ENCODE measurements at regions of chr2 and their contacts with region 1.

Region 1: DNA sequence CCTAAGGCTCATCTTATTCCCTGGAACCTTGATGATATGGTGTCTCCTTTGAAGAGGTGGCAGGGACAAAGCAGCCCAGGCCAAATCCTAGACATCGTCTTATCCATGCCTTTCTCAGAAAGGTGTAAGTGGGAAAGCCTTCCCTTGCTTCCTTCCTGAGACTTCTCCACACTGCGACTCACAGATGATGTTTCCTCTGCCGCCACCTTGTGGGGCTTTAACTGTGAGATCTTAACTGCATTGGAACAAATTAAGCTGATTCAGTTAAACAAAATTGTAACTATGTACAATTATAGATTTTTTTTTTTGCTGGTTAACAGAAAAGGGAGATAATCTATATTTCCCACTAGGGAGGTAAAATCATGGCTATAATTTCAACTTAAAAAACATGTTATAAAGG is 10.0 kb upstream of the GCA start:
- DNase-seq: no peak
- ATAC-seq: peak; percentile 91
- H3K4me3 ChIP-seq: no peak overlapping the region
- H3K27ac ChIP-seq: no peak overlapping the region
- H3K4me1 ChIP-seq: no peaks in the 10 kb centered on the region
- H3K27me3 ChIP-seq: no peaks in the 10 kb centered on the region
- CTCF ChIP-seq: peak; percentile 55 to 81 (median 62)
- EP300 ChIP-seq: no peak
- POLR2A ChIP-seq: no peak
- RAD21 ChIP-seq: peak; percentile 71

Region 2: DNA sequence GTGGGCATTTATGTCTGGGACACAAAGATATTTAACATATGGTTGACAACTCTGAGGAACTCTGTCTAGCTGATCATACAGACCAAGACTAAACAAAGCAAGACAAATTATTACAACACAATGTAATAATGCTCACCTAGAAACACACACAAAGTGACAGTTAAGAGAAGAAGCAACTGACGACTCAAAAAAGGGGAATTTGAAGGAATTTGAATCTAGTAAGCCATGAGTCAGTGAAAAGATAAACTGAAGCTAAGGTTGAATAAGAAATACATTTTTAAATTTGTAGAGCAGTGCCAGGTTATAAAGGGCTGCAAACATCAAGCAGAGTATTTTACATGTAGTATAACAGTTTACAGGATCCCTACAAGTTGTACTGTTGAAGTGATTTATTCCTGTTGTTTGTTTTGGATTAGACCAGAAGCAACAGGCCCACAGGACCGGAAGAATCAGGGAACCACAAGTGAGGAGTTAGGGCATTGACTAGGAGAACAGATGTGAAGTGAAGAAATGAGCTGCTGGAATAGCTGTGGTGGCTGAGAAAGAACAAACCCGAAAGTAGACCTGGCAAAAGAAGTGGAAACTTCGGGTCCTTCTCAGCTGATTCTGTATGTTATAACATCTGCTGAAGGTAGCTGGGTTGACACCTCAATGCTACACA is 51.1 kb before region 1 on chr2:
- CTCF ChIA-PET with region 1: interaction called, 24 read pairs
- POLR2A ChIA-PET with region 1: no interaction called
- RAD21 ChIA-PET with region 1: interaction called, 3 read pairs
- SMC1A ChIA-PET with region 1: interaction called, 5 read pairs
- in situ Hi-C with region 1: no loop called
- intact Hi-C with region 1: no loop called
- DNase-seq: no peak
- ATAC-seq: no peak
- H3K4me3 ChIP-seq: no peak overlapping the region
- H3K27ac ChIP-seq: no peak overlapping the region
- H3K4me1 ChIP-seq: no peaks in the 10 kb centered on the region
- H3K27me3 ChIP-seq: no peaks in the 10 kb centered on the region
- CTCF ChIP-seq: no peak
- EP300 ChIP-seq: no peak
- POLR2A ChIP-seq: no peak
- RAD21 ChIP-seq: no peak

Region 3: DNA sequence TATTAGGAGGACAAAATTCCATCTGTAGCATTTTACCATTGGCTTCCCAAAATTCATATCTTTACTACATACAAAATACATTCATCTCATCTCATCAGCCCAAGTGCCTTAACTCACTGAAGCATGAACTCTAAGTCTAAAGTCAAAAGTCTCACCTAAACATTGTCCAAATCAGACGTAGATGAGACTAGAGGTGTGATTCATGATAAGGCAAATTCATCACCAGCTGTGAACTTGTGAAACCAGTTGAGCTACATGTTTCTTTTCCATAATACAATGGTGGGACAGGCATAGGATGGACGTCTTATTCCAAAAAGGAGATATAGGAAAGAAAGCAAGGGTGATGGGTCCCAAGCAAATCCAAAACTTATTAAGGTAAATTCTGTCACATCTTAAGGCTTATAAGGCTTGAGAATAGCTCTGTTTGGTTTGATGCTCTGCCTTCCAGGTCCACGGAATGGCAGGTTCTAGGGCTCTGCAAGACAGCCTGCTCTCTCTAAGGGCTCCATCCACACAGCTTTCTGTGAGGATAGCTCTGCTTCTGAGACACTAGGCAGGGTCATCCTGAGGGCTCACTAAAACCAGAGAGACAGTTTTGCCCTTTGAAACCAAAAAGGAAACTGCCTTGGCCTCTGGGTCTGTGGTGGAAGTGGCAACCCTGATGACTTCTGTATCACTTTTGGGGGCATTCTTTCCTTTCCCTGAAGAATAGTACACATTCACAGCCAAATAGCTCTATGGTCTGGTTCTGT is 25.0 kb before region 1 on chr2:
- CTCF ChIA-PET with region 1: interaction called, 194 read pairs
- POLR2A ChIA-PET with region 1: interaction called, 4 read pairs
- RAD21 ChIA-PET with region 1: interaction called, 34 read pairs
- SMC1A ChIA-PET with region 1: interaction called, 15 read pairs
- in situ Hi-C with region 1: no loop called
- intact Hi-C with region 1: no loop called
- DNase-seq: no peak
- ATAC-seq: peak; percentile 51
- H3K4me3 ChIP-seq: no peak overlapping the region
- H3K27ac ChIP-seq: no peak overlapping the region
- H3K4me1 ChIP-seq: peaks cover 6% of the 10 kb centered on the region
- H3K27me3 ChIP-seq: no peaks in the 10 kb centered on the region
- CTCF ChIP-seq: no peak
- EP300 ChIP-seq: no peak
- POLR2A ChIP-seq: no peak
- RAD21 ChIP-seq: no peak

Region 4: GRCh38 chr2:162343824-162344616 is 10.1 kb after region 1 on chr2 and contains the start of gene GCA:
- CTCF ChIA-PET with region 1: interaction called, 46 read pairs
- POLR2A ChIA-PET with region 1: interaction called, 5 read pairs
- RAD21 ChIA-PET with region 1: interaction called, 7 read pairs
- SMC1A ChIA-PET with region 1: interaction called, 7 read pairs
- in situ Hi-C with region 1: no loop called
- intact Hi-C with region 1: no loop called
- DNase-seq: peak; percentile 93
- ATAC-seq: peak; percentile 99
- H3K4me3 ChIP-seq: peak within 1 kb of the TSS; percentile 98
- H3K27ac ChIP-seq: peak within 1 kb of the TSS; percentile 71
- H3K4me1 ChIP-seq: no peaks in the 10 kb centered on the region
- H3K27me3 ChIP-seq: no peaks in the 10 kb centered on the region
- CTCF ChIP-seq: no peak
- EP300 ChIP-seq: no peak
- POLR2A ChIP-seq: peak; percentile 89
- RAD21 ChIP-seq: no peak
- polyA plus RNA-seq, gene GCA: 53.5 to 81.9 TPM

Region 5: GRCh38 chr2:162710287-162710890 is 376.4 kb after region 1 on chr2:
- CTCF ChIA-PET with region 1: no interaction called
- POLR2A ChIA-PET with region 1: no interaction called
- RAD21 ChIA-PET with region 1: no interaction called
- SMC1A ChIA-PET with region 1: no interaction called
- in situ Hi-C with region 1: no loop called
- intact Hi-C with region 1: no loop called
- DNase-seq: no peak
- ATAC-seq: peak; percentile 53; the same call in 2 of the 3 replicates
- H3K4me3 ChIP-seq: no peak overlapping the region
- H3K27ac ChIP-seq: no peak overlapping the region
- H3K4me1 ChIP-seq: no peaks in the 10 kb centered on the region
- H3K27me3 ChIP-seq: no peaks in the 10 kb centered on the region
- CTCF ChIP-seq: no peak
- EP300 ChIP-seq: no peak
- POLR2A ChIP-seq: no peak
- RAD21 ChIP-seq: no peak

Region 6: GRCh38 chr2:162795312-162795711 is 461.3 kb after region 1 on chr2:
- CTCF ChIA-PET with region 1: interaction called, 4 read pairs
- POLR2A ChIA-PET with region 1: no interaction called
- RAD21 ChIA-PET with region 1: interaction called, 5 read pairs
- SMC1A ChIA-PET with region 1: interaction called, 13 read pairs
- in situ Hi-C with region 1: no loop called
- intact Hi-C with region 1: no loop called
- DNase-seq: no peak
- ATAC-seq: peak; percentile 59; the same call in 2 of the 3 replicates
- H3K4me3 ChIP-seq: no peak overlapping the region
- H3K27ac ChIP-seq: no peak overlapping the region
- H3K4me1 ChIP-seq: no peaks in the 10 kb centered on the region
- H3K27me3 ChIP-seq: no peaks in the 10 kb centered on the region
- CTCF ChIP-seq: peak; percentile 17 to 42 (median 40); a peak in 4 of 6 replicates
- EP300 ChIP-seq: no peak
- POLR2A ChIP-seq: no peak
- RAD21 ChIP-seq: peak; percentile 72